ENCODE measurements at regions of chr1 and their contacts with region 1.

Region 1: DNA sequence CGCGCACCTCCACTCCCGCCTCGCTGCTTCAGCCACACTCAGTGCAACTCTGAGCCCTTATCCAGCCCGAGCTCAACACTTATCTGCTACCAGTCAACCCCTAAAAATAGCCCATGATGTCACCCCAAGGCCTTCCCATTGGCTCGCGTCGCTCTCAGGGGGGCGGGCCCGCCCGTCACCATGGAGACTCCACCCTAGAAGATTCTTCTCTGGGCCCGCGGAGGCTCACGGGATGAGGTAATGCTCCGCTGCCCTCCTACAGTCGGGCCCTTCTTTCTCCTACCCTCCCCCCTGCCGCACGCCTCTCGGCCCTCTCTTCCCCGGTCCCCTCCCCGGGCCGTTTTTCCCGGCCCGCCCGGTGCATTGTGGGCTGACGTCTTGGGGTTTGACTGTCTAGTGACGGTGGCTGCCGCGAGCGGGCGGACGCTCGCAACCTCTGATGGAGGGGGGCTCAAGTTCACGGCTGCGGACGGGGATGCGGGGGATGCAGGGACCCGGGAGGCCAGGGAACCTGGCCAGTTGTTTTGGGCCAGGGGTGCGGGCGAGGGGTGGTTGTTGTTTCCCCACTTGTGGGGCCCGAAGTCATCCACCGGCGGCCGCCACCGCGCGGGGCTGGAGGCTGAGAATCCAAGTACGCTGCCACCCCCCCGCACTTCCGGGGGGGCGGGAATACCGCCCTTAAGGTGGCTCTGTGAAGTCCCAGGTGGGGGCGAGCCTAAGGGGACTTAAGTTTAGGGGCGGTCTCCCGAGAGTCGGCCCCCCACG is at the start of gene JUN:
- DNase-seq: peak; percentile 99
- H3K4me3 ChIP-seq: peak within 1 kb of the TSS; percentile 91 to 96 (median 93)
- H3K27ac ChIP-seq: peak within 1 kb of the TSS; percentile 98
- H3K4me1 ChIP-seq: peaks cover 13% of the 10 kb centered on the region
- H3K27me3 ChIP-seq: no peaks in the 10 kb centered on the region
- CTCF ChIP-seq: peak in 1 of 2 donors; percentile 19
- total RNA-seq, gene JUN: 61.1 to 78.7 TPM

Region 2: DNA sequence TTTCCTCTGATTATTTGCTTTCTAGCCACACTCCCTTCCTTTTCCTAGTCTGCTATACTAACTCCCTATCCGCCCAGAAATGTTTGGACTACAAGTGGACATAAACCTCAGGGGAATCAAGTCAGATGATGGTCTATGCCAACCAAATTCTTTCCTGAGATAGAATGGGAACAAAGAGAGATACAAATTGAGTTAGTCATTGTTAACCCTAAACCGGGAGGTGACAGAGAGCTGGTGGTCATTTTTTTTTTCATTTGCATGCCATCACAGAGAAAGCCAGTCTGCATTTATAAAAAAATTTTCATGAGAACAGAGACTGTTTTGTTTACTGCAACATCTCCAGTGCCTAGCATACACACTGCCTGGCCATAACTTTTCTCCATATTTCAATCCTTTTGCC is 119.3 kb before region 1 on chr1:
- CTCF ChIA-PET with region 1: no interaction called
- dilution Hi-C with region 1: no loop called
- in situ Hi-C with region 1: no loop called
- intact Hi-C with region 1: no loop called
- DNase-seq: no peak
- H3K4me3 ChIP-seq: no peak overlapping the region
- H3K27ac ChIP-seq: no peak overlapping the region
- H3K4me1 ChIP-seq: no peaks in the 10 kb centered on the region
- H3K27me3 ChIP-seq: no peaks in the 10 kb centered on the region
- CTCF ChIP-seq: no peak

Region 3: GRCh38 chr1:58679463-58679862 is 104.7 kb before region 1 on chr1:
- CTCF ChIA-PET with region 1: no interaction called
- dilution Hi-C with region 1: no loop called
- in situ Hi-C with region 1: no loop called
- intact Hi-C with region 1: no loop called
- DNase-seq: no peak
- H3K4me3 ChIP-seq: no peak overlapping the region
- H3K27ac ChIP-seq: no peak overlapping the region
- H3K4me1 ChIP-seq: no peaks in the 10 kb centered on the region
- H3K27me3 ChIP-seq: no peaks in the 10 kb centered on the region
- CTCF ChIP-seq: no peak

Region 4: GRCh38 chr1:58699011-58699762 is 85.0 kb before region 1 on chr1:
- CTCF ChIA-PET with region 1: no interaction called
- dilution Hi-C with region 1: no loop called
- in situ Hi-C with region 1: no loop called
- intact Hi-C with region 1: no loop called
- DNase-seq: peak; percentile 8
- H3K4me3 ChIP-seq: peak overlapping the region; percentile 54 to 88 (median 82)
- H3K27ac ChIP-seq: peak overlapping the region; percentile 86
- H3K4me1 ChIP-seq: peaks cover 6% of the 10 kb centered on the region
- H3K27me3 ChIP-seq: no peaks in the 10 kb centered on the region
- CTCF ChIP-seq: no peak

Region 5: DNA sequence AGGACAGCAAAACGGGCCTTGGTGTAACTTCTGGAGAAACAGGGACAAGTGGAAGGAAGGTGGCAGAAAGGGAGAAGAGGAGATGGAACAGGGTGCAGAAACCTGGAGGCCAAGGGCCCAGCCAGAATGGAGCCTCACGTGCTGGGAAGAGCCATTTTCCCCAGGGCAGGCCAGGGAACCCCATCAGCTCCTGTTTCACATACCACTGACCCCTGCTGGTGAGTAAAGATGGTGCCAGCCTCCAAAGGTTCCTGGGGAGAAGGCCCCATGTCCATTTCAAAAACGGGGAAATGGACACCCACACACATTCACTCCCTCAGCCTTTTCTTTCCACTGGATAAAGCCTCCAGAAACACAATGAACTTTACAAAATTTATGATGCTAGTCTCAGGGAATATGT is 57.3 kb after region 1 on chr1:
- CTCF ChIA-PET with region 1: no interaction called
- dilution Hi-C with region 1: loop called (anchors 5 kb)
- in situ Hi-C with region 1: loop called in 1 of 2 experiments (anchors 10 kb)
- intact Hi-C with region 1: loop called (anchors 2 kb)
- DNase-seq: no peak
- H3K4me3 ChIP-seq: no peak overlapping the region
- H3K27ac ChIP-seq: no peak overlapping the region
- H3K4me1 ChIP-seq: peaks cover 13% of the 10 kb centered on the region
- H3K27me3 ChIP-seq: no peaks in the 10 kb centered on the region
- CTCF ChIP-seq: peak; percentile 19 to 44

Region 6: GRCh38 chr1:58903514-58904298 is 119.5 kb after region 1 on chr1:
- CTCF ChIA-PET with region 1: no interaction called
- dilution Hi-C with region 1: no loop called
- in situ Hi-C with region 1: loop called in 1 of 2 experiments (anchors 10 kb)
- intact Hi-C with region 1: loop called (anchors 1 kb)
- DNase-seq: peak; percentile 84
- H3K4me3 ChIP-seq: peak overlapping the region; percentile 14 to 52 (median 48)
- H3K27ac ChIP-seq: peak overlapping the region; percentile 72
- H3K4me1 ChIP-seq: peaks cover 32% of the 10 kb centered on the region
- H3K27me3 ChIP-seq: no peaks in the 10 kb centered on the region
- CTCF ChIP-seq: no peak

Region 7: DNA sequence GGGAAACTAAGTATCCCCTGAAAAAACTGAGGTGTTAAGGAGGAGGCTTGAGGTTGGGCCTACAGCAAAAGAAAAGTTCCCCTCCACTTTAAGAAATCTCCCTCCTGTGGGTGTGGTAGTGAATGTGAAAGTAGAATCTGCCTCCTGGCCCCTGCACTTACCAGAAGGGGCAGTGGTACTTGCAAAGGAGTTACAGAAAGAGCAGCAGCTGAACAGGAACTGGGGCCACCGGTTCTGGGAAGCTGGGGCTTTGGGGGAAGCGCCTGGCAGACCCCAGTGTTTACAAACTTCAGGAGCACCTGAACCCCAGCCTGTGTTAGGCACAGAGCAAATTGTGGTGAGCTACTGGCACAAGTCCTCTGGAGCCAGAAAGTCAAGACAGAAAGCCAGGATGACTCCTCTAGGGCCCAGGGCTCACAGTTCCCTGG is 262.6 kb after region 1 on chr1:
- CTCF ChIA-PET with region 1: no interaction called
- dilution Hi-C with region 1: no loop called
- in situ Hi-C with region 1: no loop called
- intact Hi-C with region 1: loop called (anchors 1 kb)
- DNase-seq: no peak
- H3K4me3 ChIP-seq: no peak overlapping the region
- H3K27ac ChIP-seq: no peak overlapping the region
- H3K4me1 ChIP-seq: peaks cover 12% of the 10 kb centered on the region
- H3K27me3 ChIP-seq: no peaks in the 10 kb centered on the region
- CTCF ChIP-seq: no peak

Region 8: GRCh38 chr1:59296358-59297256 is 512.4 kb after region 1 on chr1 and contains the start of gene FGGY:
- CTCF ChIA-PET with region 1: no interaction called
- dilution Hi-C with region 1: no loop called
- in situ Hi-C with region 1: loop called in 1 of 2 experiments (anchors 5 kb)
- intact Hi-C with region 1: loop called (anchors 1 kb)
- DNase-seq: peak; percentile 98
- H3K4me3 ChIP-seq: peak within 1 kb of the TSS; percentile 28 to 62 (median 58)
- H3K27ac ChIP-seq: peak within 1 kb of the TSS; percentile 82
- H3K4me1 ChIP-seq: peaks cover 14% of the 10 kb centered on the region
- H3K27me3 ChIP-seq: no peaks in the 10 kb centered on the region
- CTCF ChIP-seq: no peak
- total RNA-seq, gene FGGY: 10.3 to 14.7 TPM

Region 9: DNA sequence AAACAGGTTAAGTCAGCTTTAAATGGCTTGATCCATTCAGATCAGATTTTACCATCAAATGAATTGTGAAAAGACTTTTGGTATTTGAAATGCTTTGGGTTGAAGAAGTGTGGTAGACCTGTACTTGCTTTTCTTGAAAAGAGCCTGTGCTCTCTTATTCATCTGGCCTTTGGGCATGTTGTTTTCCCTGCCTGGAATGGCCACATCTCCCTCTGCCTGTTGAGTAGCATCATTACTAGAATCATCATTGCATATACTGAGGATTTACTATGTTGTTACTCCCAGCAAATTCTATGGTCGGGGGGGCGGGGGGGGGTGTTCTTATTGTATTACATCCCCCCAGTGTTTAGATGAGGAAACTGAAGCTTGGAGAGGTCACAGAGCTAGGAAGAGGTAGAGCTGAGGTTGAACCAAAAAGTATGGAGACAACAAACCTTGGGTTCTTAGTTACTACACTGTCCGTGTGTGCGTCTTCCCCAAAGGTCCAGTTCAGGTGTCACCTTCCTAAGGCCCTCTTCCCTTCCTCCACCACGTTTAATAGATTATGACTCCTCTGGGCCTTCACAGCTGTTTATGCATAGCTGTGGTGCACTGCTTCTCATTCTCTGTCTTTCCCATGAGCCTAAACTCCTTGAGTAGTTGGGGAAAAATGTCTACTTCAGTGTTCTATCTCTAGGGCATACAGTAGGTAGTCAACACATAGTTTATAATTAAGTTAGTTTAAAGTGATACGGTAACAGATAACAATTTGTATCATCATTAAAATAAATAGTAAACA is 784.2 kb after region 1 on chr1:
- CTCF ChIA-PET with region 1: no interaction called
- dilution Hi-C with region 1: no loop called
- in situ Hi-C with region 1: no loop called
- intact Hi-C with region 1: loop called (anchors 1 kb)
- DNase-seq: peak; percentile 16
- H3K4me3 ChIP-seq: no peak overlapping the region
- H3K27ac ChIP-seq: no peak overlapping the region
- H3K4me1 ChIP-seq: peaks cover 3% of the 10 kb centered on the region
- H3K27me3 ChIP-seq: no peaks in the 10 kb centered on the region
- CTCF ChIP-seq: peak in 1 of 2 donors; percentile 58